Mammary epithelial cell (primary cell): ENCODE measurements at regions of chr6 and their contacts with region 1.

Region 1: DNA sequence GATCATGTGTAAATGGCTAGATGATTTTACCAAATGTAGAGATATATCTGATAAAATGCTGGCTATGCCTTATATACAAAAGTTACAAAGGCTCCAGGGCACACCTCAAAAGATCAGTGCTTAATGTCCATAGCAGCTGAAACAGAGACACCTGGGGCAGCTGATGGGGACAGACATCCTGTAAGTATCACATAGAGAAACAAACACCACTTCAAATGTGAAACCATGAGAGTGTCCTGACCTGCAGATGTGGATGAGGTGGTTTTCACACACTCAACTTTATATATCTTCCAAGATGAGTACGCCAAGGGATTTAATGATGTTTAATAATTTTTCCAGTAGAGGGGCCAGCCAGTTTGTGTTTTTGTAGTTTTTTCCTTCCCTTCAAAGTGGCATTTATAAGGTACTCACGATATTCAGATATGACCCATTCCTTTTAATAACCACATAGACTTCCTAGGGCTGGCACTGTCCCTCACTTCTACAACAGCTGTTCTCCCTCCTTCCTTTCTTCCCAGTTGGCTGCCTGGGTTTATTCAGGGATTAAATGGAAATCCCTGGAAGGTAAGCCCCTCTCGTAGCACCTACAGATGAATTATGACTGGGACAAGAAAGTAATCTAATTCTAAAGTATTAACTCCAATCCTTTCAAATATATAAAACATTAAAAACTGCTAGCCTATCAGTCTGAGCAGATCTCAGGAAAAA is 50.3 kb upstream of the MCM9 start:
- DNase-seq: no peak
- H3K4me3 ChIP-seq: no peak overlapping the region
- H3K27ac ChIP-seq: no peak overlapping the region
- H3K4me1 ChIP-seq: no peaks in the 10 kb centered on the region
- H3K27me3 ChIP-seq: no peaks in the 10 kb centered on the region
- CTCF ChIP-seq: no peak

Region 2: GRCh38 chr6:119020597-119021561 is 35.6 kb after region 1 on chr6:
- CTCF ChIA-PET with region 1: no interaction called
- dilution Hi-C with region 1: loop called (anchors 5 kb)
- in situ Hi-C with region 1: no loop called
- intact Hi-C with region 1: no loop called
- DNase-seq: no peak
- H3K4me3 ChIP-seq: no peak overlapping the region
- H3K27ac ChIP-seq: no peak overlapping the region
- H3K4me1 ChIP-seq: no peaks in the 10 kb centered on the region
- H3K27me3 ChIP-seq: no peaks in the 10 kb centered on the region
- CTCF ChIP-seq: no peak

Region 3: GRCh38 chr6:119034827-119035458 is 49.7 kb after region 1 on chr6:
- CTCF ChIA-PET with region 1: no interaction called
- dilution Hi-C with region 1: no loop called
- in situ Hi-C with region 1: no loop called
- intact Hi-C with region 1: no loop called
- DNase-seq: no peak
- H3K4me3 ChIP-seq: no peak overlapping the region
- H3K27ac ChIP-seq: no peak overlapping the region
- H3K4me1 ChIP-seq: no peaks in the 10 kb centered on the region
- H3K27me3 ChIP-seq: peaks cover 2% of the 10 kb centered on the region
- CTCF ChIP-seq: no peak